IMR-90 (cell line): ENCODE measurements at regions of chr5 and their contacts with region 1.

Region 1: GRCh38 chr5:989961-990530 is 18.6 kb upstream of the NKD2 start:
- DNase-seq: no peak
- ATAC-seq: no peak
- H3K4me3 ChIP-seq: no peak overlapping the region
- H3K27ac ChIP-seq: no peak overlapping the region
- H3K4me1 ChIP-seq: peaks cover 3% of the 10 kb centered on the region; the same call in 1 of the 2 replicates
- H3K27me3 ChIP-seq: peaks cover 21% of the 10 kb centered on the region
- CTCF ChIP-seq: no peak
- POLR2A ChIP-seq: no peak
- RAD21 ChIP-seq: no peak

Region 2: DNA sequence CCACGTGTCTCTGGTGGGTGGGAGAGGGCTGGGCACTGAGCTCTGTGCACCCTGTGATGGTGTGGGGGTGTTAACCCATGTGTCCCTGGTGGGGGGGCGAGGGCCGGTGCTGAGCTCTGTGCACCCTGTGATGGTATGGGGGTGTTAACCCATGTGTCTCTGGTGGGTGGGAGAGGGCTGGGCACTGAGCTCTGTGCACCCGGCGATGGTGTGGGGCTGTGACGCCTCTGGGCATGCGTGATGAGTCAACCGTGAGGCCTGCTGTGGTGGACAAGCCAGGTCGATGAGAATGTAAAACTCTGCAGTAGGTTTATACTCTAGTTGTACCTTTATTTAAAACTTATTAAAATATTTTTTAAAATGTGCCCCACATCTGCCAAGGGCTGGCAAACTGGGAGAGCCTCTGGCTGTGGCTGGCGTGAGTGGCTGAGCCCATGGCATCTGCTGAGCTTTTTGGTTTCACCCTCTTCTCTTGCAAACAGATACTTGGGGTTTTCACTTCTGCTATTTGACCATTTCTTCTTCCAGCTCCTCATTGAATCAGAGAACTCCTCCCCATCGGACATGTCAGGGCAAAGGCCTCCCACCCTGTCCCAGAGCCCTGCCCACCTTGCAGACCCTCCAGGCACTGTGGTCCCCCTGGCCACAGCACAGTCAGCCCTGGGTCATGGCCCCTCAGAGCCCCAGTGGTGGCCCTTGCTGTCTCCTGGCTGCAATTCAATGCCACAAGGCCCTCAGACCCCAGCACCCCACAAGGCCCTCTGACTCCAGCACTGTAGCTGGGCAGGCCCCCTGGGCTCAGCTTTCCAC is 565.5 kb before region 1 on chr5:
- CTCF ChIA-PET with region 1: no interaction called
- POLR2A ChIA-PET with region 1: no interaction called
- dilution Hi-C with region 1: no loop called
- in situ Hi-C with region 1: no loop called
- intact Hi-C with region 1: no loop called
- DNase-seq: peak; percentile 31
- ATAC-seq: no peak; the same call in 1 of the 2 replicates
- H3K4me3 ChIP-seq: no peak overlapping the region
- H3K27ac ChIP-seq: peak overlapping the region; percentile 33
- H3K4me1 ChIP-seq: peaks cover 5% of the 10 kb centered on the region
- H3K27me3 ChIP-seq: no peaks in the 10 kb centered on the region
- CTCF ChIP-seq: no peak
- POLR2A ChIP-seq: no peak
- RAD21 ChIP-seq: no peak

Region 3: DNA sequence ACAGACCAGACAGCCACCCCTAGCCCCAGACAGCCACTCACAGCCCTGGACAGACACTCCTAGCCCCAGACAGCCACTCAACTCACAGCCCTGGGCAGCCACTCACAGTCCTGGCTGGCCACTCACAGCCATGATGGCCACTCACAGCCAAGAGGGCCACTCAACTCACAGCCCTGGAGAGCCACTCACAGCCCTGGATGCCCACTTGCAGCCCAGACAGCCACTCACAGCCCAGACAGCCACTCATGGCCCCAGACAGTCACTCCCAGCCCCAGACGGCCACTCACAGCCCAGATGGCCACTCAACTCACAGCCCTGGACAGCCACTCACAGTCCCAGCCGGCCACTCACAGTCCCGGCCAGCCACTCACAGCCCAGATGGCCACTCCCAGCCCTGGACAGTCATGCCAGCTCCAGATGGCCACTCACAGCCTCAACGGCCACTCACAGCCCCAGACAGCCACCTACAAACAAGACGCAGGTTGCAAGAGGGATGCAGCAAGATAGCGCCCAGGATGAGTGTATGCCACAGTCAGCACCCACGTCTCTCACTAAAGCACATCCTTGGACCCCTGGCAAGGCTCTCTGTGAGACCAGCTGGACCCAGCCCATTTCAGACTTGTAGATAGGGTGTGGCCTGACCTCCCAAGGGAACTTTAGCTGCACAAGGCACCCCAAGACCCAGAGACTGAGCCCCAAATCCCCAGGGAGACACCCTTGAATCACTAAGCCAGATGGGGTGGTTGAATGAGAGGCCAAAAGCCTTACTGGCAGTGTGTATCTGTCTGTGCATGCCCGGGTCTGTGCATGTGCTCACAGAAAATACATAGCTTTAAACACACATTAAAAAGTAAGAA is 228.0 kb before region 1 on chr5:
- CTCF ChIA-PET with region 1: no interaction called
- POLR2A ChIA-PET with region 1: no interaction called
- dilution Hi-C with region 1: no loop called
- in situ Hi-C with region 1: no loop called
- intact Hi-C with region 1: no loop called
- DNase-seq: no peak
- ATAC-seq: no peak
- H3K4me3 ChIP-seq: no peak overlapping the region
- H3K27ac ChIP-seq: no peak overlapping the region
- H3K4me1 ChIP-seq: no peaks in the 10 kb centered on the region
- H3K27me3 ChIP-seq: peaks cover 31% of the 10 kb centered on the region
- CTCF ChIP-seq: no peak
- POLR2A ChIP-seq: no peak
- RAD21 ChIP-seq: no peak

Region 4: GRCh38 chr5:821504-821903 is 168.5 kb before region 1 on chr5:
- CTCF ChIA-PET with region 1: no interaction called
- POLR2A ChIA-PET with region 1: no interaction called
- dilution Hi-C with region 1: no loop called
- in situ Hi-C with region 1: no loop called
- intact Hi-C with region 1: no loop called
- DNase-seq: no peak
- ATAC-seq: no peak
- H3K4me3 ChIP-seq: no peak overlapping the region
- H3K27ac ChIP-seq: no peak overlapping the region
- H3K4me1 ChIP-seq: no peaks in the 10 kb centered on the region
- H3K27me3 ChIP-seq: peaks cover 4% of the 10 kb centered on the region; the same call in 1 of the 2 replicates
- CTCF ChIP-seq: no peak
- POLR2A ChIP-seq: no peak
- RAD21 ChIP-seq: no peak

Region 5: GRCh38 chr5:1648806-1649205 is 658.8 kb after region 1 on chr5:
- CTCF ChIA-PET with region 1: interaction called, 12 read pairs
- POLR2A ChIA-PET with region 1: no interaction called
- dilution Hi-C with region 1: no loop called
- in situ Hi-C with region 1: no loop called
- intact Hi-C with region 1: no loop called
- DNase-seq: no peak
- ATAC-seq: no peak
- H3K4me3 ChIP-seq: no peak overlapping the region
- H3K27ac ChIP-seq: no peak overlapping the region
- H3K4me1 ChIP-seq: no peaks in the 10 kb centered on the region
- H3K27me3 ChIP-seq: peaks cover 41% of the 10 kb centered on the region
- CTCF ChIP-seq: no peak
- POLR2A ChIP-seq: no peak
- RAD21 ChIP-seq: no peak